BJ (cell line): ENCODE measurements at regions of chr3 and their contacts with region 1.

Region 1: DNA sequence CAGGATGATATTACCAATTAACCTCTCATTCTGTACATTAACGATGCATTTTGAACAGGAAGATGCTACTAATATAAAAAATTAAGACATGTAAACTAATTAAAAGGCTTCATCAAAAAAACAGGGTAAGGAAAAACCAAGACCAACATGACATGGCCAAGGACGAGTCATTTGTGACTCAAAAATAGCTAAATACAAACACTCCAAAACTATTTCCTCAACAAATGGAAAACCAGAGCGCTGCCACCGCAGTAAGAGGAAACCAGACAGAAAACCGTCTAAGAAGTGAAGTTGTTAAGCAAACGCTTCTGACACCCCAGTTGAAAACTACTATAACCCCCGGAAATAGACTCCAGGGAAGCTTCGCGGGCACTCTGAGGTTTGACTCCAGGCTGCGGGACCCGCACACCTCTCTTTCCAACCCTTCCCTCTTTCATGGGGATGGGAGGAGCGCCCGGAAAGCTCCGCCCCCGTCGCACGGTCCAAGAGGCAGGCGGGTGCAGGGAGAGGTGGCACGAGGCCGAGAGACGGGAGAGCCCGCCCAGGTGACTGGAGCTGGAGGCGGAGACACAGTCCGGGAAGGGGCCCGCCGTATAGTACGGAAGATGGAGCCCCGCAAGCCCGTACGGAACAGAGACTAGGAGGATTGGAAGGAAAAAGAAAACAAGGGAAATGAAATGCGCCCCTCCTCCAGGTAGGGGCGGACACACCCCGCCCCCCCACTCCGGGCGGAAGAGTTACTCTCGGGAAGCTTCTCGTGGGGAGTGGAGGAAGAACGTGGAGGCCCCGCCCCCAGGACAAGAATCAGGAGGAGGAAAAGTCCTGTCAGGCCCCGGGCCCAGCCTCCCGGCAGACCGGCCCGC is 708 bp downstream of the DCAF1 start:
- DNase-seq: peak; percentile 54
- H3K4me3 ChIP-seq: peak overlapping the region; percentile 59
- H3K27me3 ChIP-seq: no peaks in the 10 kb centered on the region
- CTCF ChIP-seq: no peak

Region 2: GRCh38 chr3:50600841-50601591 is 898.1 kb before region 1 on chr3:
- CTCF ChIA-PET with region 1: no interaction called
- POLR2A ChIA-PET with region 1: interaction called, 23 read pairs
- DNase-seq: peak; percentile 92
- H3K4me3 ChIP-seq: no peak overlapping the region
- H3K27me3 ChIP-seq: no peaks in the 10 kb centered on the region
- CTCF ChIP-seq: no peak

Region 3: GRCh38 chr3:51511000-51511399 is 11.9 kb after region 1 on chr3:
- CTCF ChIA-PET with region 1: interaction called, 31 read pairs
- POLR2A ChIA-PET with region 1: no interaction called
- DNase-seq: no peak
- H3K4me3 ChIP-seq: no peak overlapping the region
- H3K27me3 ChIP-seq: no peaks in the 10 kb centered on the region
- CTCF ChIP-seq: no peak

Region 4: DNA sequence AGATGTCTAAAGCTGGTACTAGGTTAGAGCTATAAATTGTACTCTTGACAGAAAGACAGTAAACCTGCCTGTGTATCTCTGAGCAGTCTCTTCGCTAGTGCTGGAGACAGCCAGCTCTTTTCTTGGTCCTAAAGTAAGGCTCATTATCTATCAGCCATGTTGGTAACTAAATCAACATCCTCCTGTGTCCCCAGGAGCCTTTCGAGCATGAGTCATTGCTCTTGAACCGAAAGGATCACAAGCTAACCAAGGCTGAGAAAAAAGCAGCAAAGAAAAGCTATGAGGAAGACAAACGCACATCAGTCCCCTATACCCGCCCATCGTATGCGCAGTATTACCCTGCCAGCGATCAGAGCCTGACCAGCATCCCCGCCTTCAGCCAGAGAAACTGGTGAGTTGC is 147.0 kb after region 1 on chr3:
- CTCF ChIA-PET with region 1: interaction called, 16 read pairs
- POLR2A ChIA-PET with region 1: no interaction called
- DNase-seq: no peak
- H3K4me3 ChIP-seq: no peak overlapping the region
- H3K27me3 ChIP-seq: no peaks in the 10 kb centered on the region
- CTCF ChIP-seq: no peak

Region 5: GRCh38 chr3:51682079-51682478 is 183.0 kb after region 1 on chr3:
- CTCF ChIA-PET with region 1: interaction called, 78 read pairs
- POLR2A ChIA-PET with region 1: interaction called, 3 read pairs
- DNase-seq: peak; percentile 52
- H3K4me3 ChIP-seq: no peak overlapping the region
- H3K27me3 ChIP-seq: no peaks in the 10 kb centered on the region
- CTCF ChIP-seq: peak; percentile 83